Calu3 (cell line): ENCODE measurements at regions of chr2 and their contacts with region 1.

Region 1: GRCh38 chr2:238139196-238140039 is 950 bp downstream of the KLHL30 start:
- DNase-seq: no peak
- H3K4me3 Mint-ChIP-seq: no peak overlapping the region
- H3K27ac Mint-ChIP-seq: no peak overlapping the region
- H3K4me1 Mint-ChIP-seq: peaks cover 28% of the 10 kb centered on the region
- H3K27me3 Mint-ChIP-seq: no peaks in the 10 kb centered on the region
- CTCF ChIP-seq: peak; percentile 64

Region 2: DNA sequence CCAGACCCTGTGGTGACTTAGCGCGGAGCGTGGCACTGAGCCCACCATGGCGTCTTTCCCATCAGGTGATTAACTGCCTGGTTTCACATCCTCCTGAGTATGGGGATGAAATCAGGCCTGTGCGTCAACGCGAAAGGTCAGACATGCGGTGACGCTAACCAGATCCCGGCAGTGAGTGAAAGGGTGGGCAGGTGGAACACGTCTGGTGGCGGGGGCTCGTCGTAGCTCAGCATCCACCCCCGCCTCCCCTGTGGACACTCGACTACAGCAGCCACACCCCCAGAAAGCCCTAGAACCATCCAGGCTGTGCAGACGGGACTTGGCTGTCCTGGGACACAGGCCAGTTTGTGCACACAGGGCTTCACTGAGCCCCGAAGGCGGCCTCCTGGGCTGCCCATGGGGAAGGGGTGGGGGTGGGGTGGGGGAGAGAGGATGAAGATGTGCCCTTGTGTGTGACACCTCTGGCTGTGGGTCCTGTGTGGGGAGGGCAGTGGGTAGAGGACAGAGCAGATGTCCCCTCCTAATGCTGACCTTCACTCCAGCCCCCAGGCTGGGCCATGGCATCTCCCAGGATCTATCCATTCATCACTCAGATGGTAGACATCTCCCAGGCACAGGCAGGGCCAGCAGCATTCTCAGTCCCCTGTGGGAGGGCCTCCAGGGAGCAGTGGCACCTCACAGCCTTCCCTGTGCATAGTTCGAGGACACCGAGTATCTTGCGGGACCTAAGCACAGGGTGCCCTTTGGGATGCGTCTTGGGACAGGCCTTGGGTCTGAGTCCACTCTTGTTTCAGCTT is 252.5 kb before region 1 on chr2:
- CTCF ChIA-PET with region 1: no interaction called
- intact Hi-C with region 1: no loop called
- DNase-seq: no peak
- H3K4me3 Mint-ChIP-seq: no peak overlapping the region
- H3K27ac Mint-ChIP-seq: no peak overlapping the region
- H3K4me1 Mint-ChIP-seq: no peaks in the 10 kb centered on the region
- H3K27me3 Mint-ChIP-seq: no peaks in the 10 kb centered on the region
- CTCF ChIP-seq: no peak

Region 3: GRCh38 chr2:238060542-238061314 is 78.7 kb before region 1 on chr2 and contains the start of gene SCLY:
- CTCF ChIA-PET with region 1: interaction called, 3 read pairs
- intact Hi-C with region 1: loop called (anchors 5 kb)
- DNase-seq: peak; percentile 98
- H3K4me3 Mint-ChIP-seq: peak within 1 kb of the TSS; percentile 83
- H3K27ac Mint-ChIP-seq: peak within 1 kb of the TSS; percentile 57
- H3K4me1 Mint-ChIP-seq: peaks cover 55% of the 10 kb centered on the region
- H3K27me3 Mint-ChIP-seq: peaks cover 11% of the 10 kb centered on the region
- CTCF ChIP-seq: no peak
- total RNA-seq, gene SCLY: 37.5 and 38.2 TPM in 2 replicates

Region 4: DNA sequence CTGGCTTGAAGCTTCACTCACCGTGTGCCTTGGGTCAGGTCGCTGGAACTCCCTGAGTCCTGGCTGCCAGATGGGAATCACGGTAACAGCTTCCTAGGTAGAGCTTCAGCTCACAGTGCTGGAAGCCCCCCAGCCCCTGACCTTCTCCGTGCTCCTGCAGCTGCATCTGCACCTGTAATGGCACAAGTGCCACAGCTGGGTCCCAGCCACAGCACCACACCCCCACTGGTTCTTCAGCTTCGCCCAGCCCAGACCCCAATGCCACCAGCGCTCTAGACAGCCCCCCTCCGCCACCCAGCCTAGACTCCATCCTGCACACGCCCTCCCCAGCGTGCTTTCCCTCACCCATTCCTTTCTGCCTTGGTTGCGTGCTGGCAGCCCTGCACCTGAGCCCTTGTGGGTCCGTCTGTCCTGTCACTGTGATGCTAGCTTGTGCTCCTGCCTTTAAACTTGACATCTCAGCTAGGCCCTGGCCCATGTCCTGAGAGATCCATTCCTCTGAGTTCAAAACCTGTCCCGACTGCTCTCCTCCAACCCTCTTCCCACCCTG is 46.9 kb before region 1 on chr2:
- CTCF ChIA-PET with region 1: no interaction called
- intact Hi-C with region 1: no loop called
- DNase-seq: no peak
- H3K4me3 Mint-ChIP-seq: no peak overlapping the region
- H3K27ac Mint-ChIP-seq: no peak overlapping the region
- H3K4me1 Mint-ChIP-seq: no peaks in the 10 kb centered on the region
- H3K27me3 Mint-ChIP-seq: no peaks in the 10 kb centered on the region
- CTCF ChIP-seq: no peak